ENCODE measurements at regions of chr1 and their contacts with region 1.

Region 1: GRCh38 chr1:16217061-16217785 is 4.8 kb upstream of the ARHGEF19 start:
- DNase-seq: peak; percentile 97
- H3K4me3 Mint-ChIP-seq: peak overlapping the region; percentile 86
- H3K27ac Mint-ChIP-seq: peak overlapping the region; percentile 59
- H3K4me1 Mint-ChIP-seq: peaks cover 34% of the 10 kb centered on the region
- H3K27me3 Mint-ChIP-seq: peaks cover 13% of the 10 kb centered on the region

Region 2: GRCh38 chr1:16231331-16232315 is 14.4 kb after region 1 on chr1:
- CTCF ChIA-PET with region 1: interaction called, 11 read pairs
- POLR2A ChIA-PET with region 1: interaction called, 28 read pairs
- DNase-seq: no peak
- H3K4me3 Mint-ChIP-seq: no peak overlapping the region
- H3K27ac Mint-ChIP-seq: no peak overlapping the region
- H3K4me1 Mint-ChIP-seq: peaks cover 13% of the 10 kb centered on the region
- H3K27me3 Mint-ChIP-seq: peaks cover 22% of the 10 kb centered on the region

Region 3: GRCh38 chr1:16236511-16237342 is 19.5 kb after region 1 on chr1 and contains the start of gene CPLANE2:
- CTCF ChIA-PET with region 1: interaction called, 11 read pairs
- POLR2A ChIA-PET with region 1: interaction called, 28 read pairs
- DNase-seq: peak; percentile 97
- H3K4me3 Mint-ChIP-seq: peak within 1 kb of the TSS; percentile 79
- H3K27ac Mint-ChIP-seq: peak within 1 kb of the TSS; percentile 82
- H3K4me1 Mint-ChIP-seq: peaks cover 43% of the 10 kb centered on the region
- H3K27me3 Mint-ChIP-seq: no peaks in the 10 kb centered on the region
- total RNA-seq, gene CPLANE2: 7.9 to 8.7 TPM

Measured in activated CD4-positive, alpha-beta memory T cell treated with anti-CD3 and anti-CD28 coated beads, Interleukin-2, amount 10 ng/mL, durations not matched to agents 7 days and 5 days (primary cell).